Panc1 (cell line): ENCODE measurements at regions of chr17 and their contacts with region 1.

Region 1: GRCh38 chr17:44030482-44030881 is 15.7 kb upstream of the TMEM101 start:
- DNase-seq: no peak
- ATAC-seq: no peak
- H3K4me3 ChIP-seq: no peak overlapping the region
- H3K27ac ChIP-seq: no peak overlapping the region
- H3K4me1 ChIP-seq: no peaks in the 10 kb centered on the region
- H3K27me3 ChIP-seq: no peaks in the 10 kb centered on the region
- CTCF ChIP-seq: no peak

Region 2: GRCh38 chr17:43927060-43927864 is 103.2 kb before region 1 on chr17:
- CTCF ChIA-PET with region 1: no interaction called
- POLR2A ChIA-PET with region 1: no interaction called
- in situ Hi-C with region 1: no loop called
- intact Hi-C with region 1: no loop called
- DNase-seq: no peak
- ATAC-seq: peak; percentile 53
- H3K4me3 ChIP-seq: peak overlapping the region; percentile 22 to 30
- H3K27ac ChIP-seq: no peak overlapping the region
- H3K4me1 ChIP-seq: no peaks in the 10 kb centered on the region; the same call in 1 of the 2 replicates
- H3K27me3 ChIP-seq: no peaks in the 10 kb centered on the region
- CTCF ChIP-seq: no peak

Region 3: DNA sequence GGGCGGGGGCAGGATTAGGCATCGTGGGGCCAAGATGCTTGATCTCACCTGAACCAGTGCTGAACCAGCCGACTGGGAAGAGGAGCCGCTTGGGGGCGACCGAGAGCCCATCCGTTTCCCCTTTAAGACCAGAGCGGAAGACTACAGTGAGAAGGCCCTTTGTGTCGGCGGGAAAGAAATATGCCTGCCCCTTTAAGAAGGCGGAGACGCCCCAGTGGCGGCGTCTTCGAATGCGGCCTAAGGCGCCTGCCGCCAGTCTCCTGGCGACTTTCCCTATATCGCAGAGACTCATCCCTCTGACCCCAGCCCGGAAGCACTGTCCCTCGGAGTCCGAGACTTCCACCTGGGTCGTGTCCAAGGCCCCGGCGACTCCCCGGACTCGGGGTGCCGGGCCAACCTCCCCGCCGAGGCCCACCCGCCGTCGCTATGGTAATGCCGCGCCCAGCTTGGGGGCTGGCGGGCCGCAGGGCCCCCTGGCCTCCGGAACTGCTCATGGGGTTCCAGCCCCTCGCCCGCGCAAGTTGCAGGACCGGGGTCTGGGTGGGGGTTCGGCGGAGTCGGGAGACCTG is 111.3 kb after region 1 on chr17 and contains the start of gene HROB:
- CTCF ChIA-PET with region 1: interaction called, 11 read pairs
- POLR2A ChIA-PET with region 1: no interaction called
- in situ Hi-C with region 1: no loop called
- intact Hi-C with region 1: no loop called
- DNase-seq: peak; percentile 85
- ATAC-seq: peak; percentile 87
- H3K4me3 ChIP-seq: peak within 1 kb of the TSS; percentile 73 to 80
- H3K27ac ChIP-seq: peak within 1 kb of the TSS; percentile 72
- H3K4me1 ChIP-seq: peaks cover 10% of the 10 kb centered on the region
- H3K27me3 ChIP-seq: no peaks in the 10 kb centered on the region
- CTCF ChIP-seq: peak; percentile 92
- total RNA-seq, gene HROB: 7.8 TPM

Region 4: DNA sequence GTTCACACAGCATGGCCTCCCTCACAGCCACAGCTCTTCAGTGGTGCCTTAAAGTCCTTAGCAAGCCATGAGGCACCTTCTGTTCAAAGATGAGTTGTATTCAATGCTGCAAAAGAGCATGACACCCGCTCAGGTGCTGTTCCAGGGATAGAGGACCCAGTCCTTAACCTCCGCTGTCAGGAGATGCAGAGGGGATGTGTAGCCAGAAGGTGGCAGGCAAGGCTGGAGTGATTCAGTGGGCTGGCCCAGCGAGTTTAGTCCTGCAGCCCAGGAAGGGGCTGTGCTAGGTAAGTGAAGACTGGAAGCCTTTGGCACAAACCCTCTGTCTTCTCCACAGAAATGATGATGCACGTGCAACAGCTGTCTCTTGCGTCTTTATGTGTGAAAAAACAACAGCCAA is 703.3 kb after region 1 on chr17:
- CTCF ChIA-PET with region 1: no interaction called
- POLR2A ChIA-PET with region 1: no interaction called
- in situ Hi-C with region 1: no loop called
- intact Hi-C with region 1: no loop called
- DNase-seq: no peak
- ATAC-seq: peak; percentile 74
- H3K4me3 ChIP-seq: no peak overlapping the region
- H3K27ac ChIP-seq: no peak overlapping the region
- H3K4me1 ChIP-seq: no peaks in the 10 kb centered on the region
- H3K27me3 ChIP-seq: no peaks in the 10 kb centered on the region
- CTCF ChIP-seq: no peak; the same call in 1 of the 2 replicates